Activated T-helper 1 cell treated with anti-CD3 and anti-CD28 coated beads, Interleukin-12 subunit alpha, Interleukin-12 subunit beta, Interleukin-2, Interleukin-4 antibody, amounts not matched to agents 30 ng/mL and 10 ng/mL and 1 ng/mL, durations not matched to agents 14 hours and 24 hours and 36 hours (primary cell): ENCODE measurements at regions of chr19 and their contacts with region 1.

Region 1: DNA sequence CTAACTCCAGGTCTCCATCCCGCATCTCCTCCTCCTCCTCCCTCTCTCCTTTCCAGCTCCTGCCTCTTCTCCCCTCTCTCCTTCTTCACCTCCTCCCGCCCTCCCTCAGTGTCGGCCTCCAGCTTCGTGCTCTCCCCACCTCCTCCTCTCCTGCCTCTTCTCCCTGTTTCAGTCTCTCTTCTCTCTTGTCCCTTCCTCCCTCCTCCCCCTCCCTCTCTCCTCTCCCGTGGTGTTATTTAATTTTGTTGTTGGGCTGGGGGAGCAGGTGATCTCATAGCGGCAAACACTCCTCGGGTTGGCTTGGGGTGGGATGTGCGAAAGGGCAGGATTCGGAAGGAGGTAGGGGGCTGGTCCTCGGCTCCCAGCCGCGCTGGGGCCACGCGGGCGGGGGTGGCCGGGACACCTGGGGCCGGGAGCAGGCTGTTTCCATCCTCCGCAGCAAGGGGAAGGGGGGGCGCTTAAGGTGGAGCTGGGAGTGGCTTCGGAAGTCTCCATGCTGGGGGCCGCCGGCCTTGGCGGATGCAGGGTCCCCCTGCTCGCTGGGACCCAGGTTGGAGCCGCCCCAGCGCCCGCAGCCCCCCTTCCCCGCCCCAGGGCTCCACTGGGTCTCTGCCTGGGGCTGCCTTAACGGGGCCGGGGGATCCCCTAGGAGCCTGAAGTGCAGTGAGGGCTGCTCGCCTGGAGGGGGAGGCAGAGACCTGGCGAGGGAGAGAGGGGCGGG is at the start of gene CA11:
- DNase-seq: peak; percentile 88
- H3K4me3 Mint-ChIP-seq: peak within 1 kb of the TSS; percentile 87
- H3K27ac Mint-ChIP-seq: peak within 1 kb of the TSS; percentile 88
- H3K4me1 Mint-ChIP-seq: peaks cover 22% of the 10 kb centered on the region
- H3K27me3 Mint-ChIP-seq: peaks cover 6% of the 10 kb centered on the region
- total RNA-seq, gene CA11: 13.0 and 13.9 TPM in 2 replicates

Region 2: GRCh38 chr19:48674921-48675824 is 29.0 kb after region 1 on chr19:
- intact Hi-C with region 1: loop called (anchors 1 kb)
- DNase-seq: peak; percentile 69
- H3K4me3 Mint-ChIP-seq: no peak overlapping the region
- H3K27ac Mint-ChIP-seq: no peak overlapping the region
- H3K4me1 Mint-ChIP-seq: peaks cover 8% of the 10 kb centered on the region
- H3K27me3 Mint-ChIP-seq: peaks cover 4% of the 10 kb centered on the region

Region 3: GRCh38 chr19:48720613-48721296 is 74.6 kb after region 1 on chr19:
- intact Hi-C with region 1: loop called (anchors 2 kb)
- DNase-seq: peak; percentile 91
- H3K4me3 Mint-ChIP-seq: peak overlapping the region; percentile 92
- H3K27ac Mint-ChIP-seq: peak overlapping the region; percentile 98
- H3K4me1 Mint-ChIP-seq: peaks cover 23% of the 10 kb centered on the region
- H3K27me3 Mint-ChIP-seq: no peaks in the 10 kb centered on the region

Region 4: DNA sequence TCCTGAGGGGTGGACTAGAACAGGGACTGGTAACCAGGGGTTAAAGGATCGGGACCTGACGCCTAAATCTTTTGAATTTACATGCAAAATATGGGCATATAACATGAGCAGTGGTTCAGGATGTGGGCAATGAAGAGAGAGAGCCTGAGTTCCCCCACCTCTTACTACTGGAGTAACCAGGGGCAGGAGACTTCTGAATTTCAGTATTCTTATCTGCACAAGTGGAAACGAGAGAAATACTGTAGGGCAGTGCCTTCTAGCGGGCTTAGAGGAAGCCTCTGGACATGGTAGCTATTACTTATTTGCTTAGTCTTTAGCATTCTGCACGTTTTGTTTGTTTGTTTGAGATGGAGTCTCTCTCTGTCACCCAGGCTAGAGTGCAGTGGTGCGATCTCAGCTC is 138.4 kb after region 1 on chr19:
- intact Hi-C with region 1: loop called (anchors 1 kb)
- DNase-seq: no peak
- H3K4me3 Mint-ChIP-seq: no peak overlapping the region
- H3K27ac Mint-ChIP-seq: no peak overlapping the region
- H3K4me1 Mint-ChIP-seq: no peaks in the 10 kb centered on the region
- H3K27me3 Mint-ChIP-seq: peaks cover 9% of the 10 kb centered on the region

Region 5: GRCh38 chr19:48842789-48843162 is 196.6 kb after region 1 on chr19:
- intact Hi-C with region 1: loop called (anchors 2 kb)
- DNase-seq: peak; percentile 22
- H3K4me3 Mint-ChIP-seq: no peak overlapping the region
- H3K27ac Mint-ChIP-seq: no peak overlapping the region
- H3K4me1 Mint-ChIP-seq: no peaks in the 10 kb centered on the region
- H3K27me3 Mint-ChIP-seq: peaks cover under 1% of the 10 kb centered on the region